T-cell (primary cell): ENCODE measurements at regions of chr10 and their contacts with region 1.

Region 1: DNA sequence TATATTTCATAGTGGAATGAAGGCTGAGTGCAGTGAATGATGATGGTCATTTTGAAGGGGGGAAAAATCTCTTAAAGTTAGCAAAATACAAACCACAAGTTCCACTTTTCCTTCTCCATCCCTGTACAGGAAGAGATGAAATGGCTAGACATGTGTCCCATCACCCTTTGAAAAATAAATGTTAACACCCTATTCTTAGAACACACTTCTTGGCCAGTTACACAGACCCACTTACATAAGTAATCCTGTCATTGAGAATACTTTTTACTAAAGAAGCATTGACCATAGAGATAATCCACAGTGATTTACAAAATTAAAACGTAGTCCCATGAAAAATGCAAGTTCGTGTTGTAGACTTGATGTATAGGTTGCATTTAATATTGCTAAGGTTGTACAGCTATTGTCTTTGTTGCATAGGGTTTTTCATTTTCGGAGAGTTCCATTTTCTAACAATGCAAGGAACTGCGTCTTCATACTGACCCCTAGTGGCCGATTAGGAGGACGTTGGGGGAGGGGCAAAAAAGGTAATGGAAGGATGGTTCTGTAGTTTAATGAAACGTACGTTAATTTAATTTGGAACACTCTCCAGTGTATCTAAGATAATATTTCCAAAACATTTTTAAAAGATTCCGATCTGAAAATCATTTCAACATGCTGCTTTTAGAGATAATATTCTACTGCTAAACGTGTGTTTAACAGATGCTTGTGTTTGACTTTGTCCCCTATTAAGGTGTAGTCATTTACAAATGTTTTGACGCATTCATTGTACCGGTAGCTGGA is 60.9 kb downstream of the ARMC3 start:
- DNase-seq: peak; percentile 19 to 87 (median 57)
- ATAC-seq: peak; percentile 72 to 84 (median 76)
- H3K4me3 ChIP-seq: no peak overlapping the region
- H3K4me3 Mint-ChIP-seq: no peak overlapping the region
- H3K27ac ChIP-seq: no peak overlapping the region
- H3K27ac Mint-ChIP-seq: no peak overlapping the region
- H3K4me1 ChIP-seq: peaks cover 0 to 5% of the 10 kb centered on the region in 2 experiments
- H3K4me1 Mint-ChIP-seq: peaks cover 7 to 20% (median 13%) of the 10 kb centered on the region in 3 donors
- H3K27me3 ChIP-seq: no peaks in the 10 kb centered on the region
- H3K27me3 Mint-ChIP-seq: peaks cover 0 to 2% of the 10 kb centered on the region in 2 donors

Region 2: DNA sequence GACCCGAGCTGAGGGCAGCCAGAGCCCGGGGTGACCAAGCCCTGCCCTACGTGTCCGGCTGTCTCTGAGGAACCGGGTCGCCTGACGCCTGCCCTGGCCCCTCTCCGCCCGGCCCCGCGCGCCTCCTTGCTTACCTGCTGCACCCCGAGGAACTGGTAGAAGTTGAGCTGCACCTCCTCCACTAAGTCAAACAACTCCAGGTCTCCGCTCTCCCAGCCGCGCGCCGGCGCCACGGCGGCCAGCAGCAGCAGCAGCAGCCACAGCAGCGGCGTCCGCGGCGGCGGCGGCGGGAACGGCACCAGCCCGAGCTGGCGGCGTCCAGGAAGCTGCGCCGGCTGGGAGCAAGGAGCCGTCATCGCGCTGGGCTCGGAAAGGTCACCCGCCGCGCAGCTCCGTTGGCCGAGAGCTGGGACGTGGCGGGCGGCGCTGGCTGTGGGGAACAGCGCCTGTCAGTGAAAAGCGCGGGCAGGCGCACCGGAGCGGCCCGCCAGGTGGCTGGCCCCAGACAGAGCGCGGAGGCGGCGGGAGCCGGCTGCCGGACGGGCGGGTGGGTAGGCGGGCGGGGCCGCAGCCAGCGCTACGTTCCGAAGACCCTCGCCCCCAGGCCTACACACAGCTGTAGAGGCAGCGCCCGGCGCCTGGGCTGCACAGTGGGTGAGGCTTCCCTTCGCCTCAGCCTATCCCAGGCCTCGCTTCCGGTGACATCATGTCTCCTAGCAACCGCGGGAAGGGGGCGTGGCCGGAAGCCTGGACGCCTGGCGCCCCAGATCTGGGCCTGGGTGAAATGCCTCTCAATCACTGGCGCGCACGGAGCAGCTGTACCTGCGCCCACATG is 985.5 kb before region 1 on chr10 and contains the start of gene DNAJC1:
- CTCF ChIA-PET with region 1: interaction called, 3 to 5 read pairs
- POLR2A ChIA-PET with region 1: interaction called in 1 of 2 experiments, 10 read pairs
- DNase-seq: peak; percentile 92 to 100 (median 97)
- ATAC-seq: peak; percentile 93 to 95 (median 94)
- H3K4me3 ChIP-seq: peak within 1 kb of the TSS; percentile 91 to 94
- H3K4me3 Mint-ChIP-seq: peak within 1 kb of the TSS; percentile 88 to 95 (median 94)
- H3K27ac ChIP-seq: peak within 1 kb of the TSS; percentile 89
- H3K27ac Mint-ChIP-seq: peak within 1 kb of the TSS; percentile 89 to 94
- H3K4me1 ChIP-seq: peaks cover 8 to 13% of the 10 kb centered on the region in 2 experiments
- H3K4me1 Mint-ChIP-seq: peaks cover 45 to 57% (median 50%) of the 10 kb centered on the region in 3 donors
- H3K27me3 ChIP-seq: peaks cover 0 to 3% of the 10 kb centered on the region in 2 experiments
- H3K27me3 Mint-ChIP-seq: peaks cover 0 to 1% of the 10 kb centered on the region in 2 donors
- total RNA-seq, gene DNAJC1: 12.8 to 23.1 (median 16.7) TPM

Region 3: GRCh38 chr10:22414146-22414545 is 574.6 kb before region 1 on chr10:
- CTCF ChIA-PET with region 1: no interaction called
- POLR2A ChIA-PET with region 1: interaction called in 1 of 2 experiments, 14 read pairs
- DNase-seq: no peak
- ATAC-seq: no peak
- H3K4me3 ChIP-seq: no peak overlapping the region
- H3K4me3 Mint-ChIP-seq: no peak overlapping the region
- H3K27ac ChIP-seq: no peak overlapping the region
- H3K27ac Mint-ChIP-seq: no peak overlapping the region
- H3K4me1 ChIP-seq: no peaks in the 10 kb centered on the region
- H3K4me1 Mint-ChIP-seq: no peaks in the 10 kb centered on the region
- H3K27me3 ChIP-seq: peaks cover 0 to 8% of the 10 kb centered on the region in 2 experiments
- H3K27me3 Mint-ChIP-seq: peaks cover 7 to 16% of the 10 kb centered on the region in 2 donors

Region 4: GRCh38 chr10:22573820-22574569 is 414.8 kb before region 1 on chr10:
- CTCF ChIA-PET with region 1: interaction called, 11 to 12 read pairs
- POLR2A ChIA-PET with region 1: no interaction called
- DNase-seq: peak in 27 of 35 experiments; percentile 4 to 72 (median 18)
- ATAC-seq: peak; percentile 49 to 67 (median 53)
- H3K4me3 ChIP-seq: no peak overlapping the region
- H3K4me3 Mint-ChIP-seq: no peak overlapping the region
- H3K27ac ChIP-seq: peak overlapping the region; percentile 40
- H3K27ac Mint-ChIP-seq: peak overlapping the region; percentile 74 to 76
- H3K4me1 ChIP-seq: peaks cover 3 to 36% of the 10 kb centered on the region in 2 experiments
- H3K4me1 Mint-ChIP-seq: peaks cover 60 to 77% (median 75%) of the 10 kb centered on the region in 3 donors
- H3K27me3 ChIP-seq: no peaks in the 10 kb centered on the region
- H3K27me3 Mint-ChIP-seq: no peaks in the 10 kb centered on the region

Region 5: DNA sequence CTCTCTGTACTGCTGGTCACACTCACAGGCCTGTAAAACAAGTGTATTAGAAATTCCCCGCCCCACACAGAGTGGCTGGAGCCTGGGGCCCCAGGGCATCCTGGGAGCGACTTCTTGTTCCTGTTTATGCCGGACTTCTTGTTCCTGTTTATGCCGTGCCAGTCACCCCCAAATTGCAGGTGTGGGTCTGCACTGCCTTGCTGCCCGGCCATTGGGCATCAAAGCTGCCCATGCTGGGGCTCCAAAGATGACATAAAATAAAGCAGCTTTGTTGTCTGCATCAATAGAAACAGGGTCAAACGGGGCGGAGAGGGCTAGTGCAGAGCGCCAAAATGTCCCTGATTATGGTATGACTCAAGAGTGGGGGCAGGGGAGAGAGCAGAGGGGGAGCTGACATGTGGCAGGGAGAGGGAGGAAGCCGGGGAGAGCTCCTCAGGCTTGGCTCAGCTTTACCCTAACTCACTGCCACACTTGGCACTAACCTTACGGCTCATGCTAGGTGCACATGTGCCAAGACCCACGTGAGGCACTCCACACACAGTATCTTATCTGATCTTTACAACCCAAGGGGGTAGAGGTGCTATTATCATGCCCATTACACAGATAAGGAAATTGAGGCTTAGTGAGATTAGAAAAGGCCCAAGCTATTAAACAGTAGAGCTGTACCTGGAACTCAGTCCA is 372.8 kb before region 1 on chr10:
- CTCF ChIA-PET with region 1: interaction called, 5 to 15 read pairs
- POLR2A ChIA-PET with region 1: interaction called in 1 of 2 experiments, 16 read pairs
- DNase-seq: peak in 13 of 35 experiments; percentile 10 to 70 (median 33)
- ATAC-seq: peak in 3 of 4 experiments; percentile 13 to 24 (median 17)
- H3K4me3 ChIP-seq: no peak overlapping the region
- H3K4me3 Mint-ChIP-seq: peak overlapping the region; percentile 57 to 64 (median 61)
- H3K27ac ChIP-seq: peak overlapping the region; percentile 93
- H3K27ac Mint-ChIP-seq: peak overlapping the region; percentile 96 to 99
- H3K4me1 ChIP-seq: peaks cover 72 to 75% of the 10 kb centered on the region in 2 experiments
- H3K4me1 Mint-ChIP-seq: peaks cover 87 to 97% (median 96%) of the 10 kb centered on the region in 3 donors
- H3K27me3 ChIP-seq: no peaks in the 10 kb centered on the region
- H3K27me3 Mint-ChIP-seq: no peaks in the 10 kb centered on the region